ENCODE measurements at regions of chr5 and their contacts with region 1.

Region 1: DNA sequence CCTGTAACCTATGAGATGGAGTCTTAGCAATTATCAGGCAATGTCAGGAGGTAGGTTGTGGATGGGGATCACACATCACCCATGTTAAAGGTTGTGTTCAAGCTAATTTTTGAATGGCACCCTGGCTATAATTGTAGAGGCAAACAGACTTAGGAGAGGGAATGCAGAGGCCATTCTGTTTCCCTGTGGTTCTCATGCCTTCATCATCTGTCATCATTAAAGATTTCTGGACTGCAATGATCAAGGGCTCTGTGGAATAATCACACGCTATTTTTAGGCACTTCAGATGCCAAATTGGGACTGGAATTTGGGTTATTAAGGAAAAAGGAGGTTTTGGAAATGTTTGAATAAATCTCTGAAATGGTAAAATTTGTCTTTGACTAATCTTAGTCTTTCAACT is 1065.4 kb downstream of the TAF11L14 start:
- DNase-seq: no peak
- H3K4me3 Mint-ChIP-seq: no peak overlapping the region
- H3K27ac Mint-ChIP-seq: no peak overlapping the region
- H3K4me1 Mint-ChIP-seq: peaks cover 7% of the 10 kb centered on the region
- H3K27me3 Mint-ChIP-seq: no peaks in the 10 kb centered on the region
- CTCF ChIP-seq: no peak

Region 2: GRCh38 chr5:18393589-18394442 is 305.9 kb before region 1 on chr5:
- CTCF ChIA-PET with region 1: interaction called, 28 read pairs
- POLR2A ChIA-PET with region 1: no interaction called
- intact Hi-C with region 1: loop called (anchors 1 kb)
- DNase-seq: peak; percentile 83
- H3K4me3 Mint-ChIP-seq: no peak overlapping the region
- H3K27ac Mint-ChIP-seq: no peak overlapping the region
- H3K4me1 Mint-ChIP-seq: no peaks in the 10 kb centered on the region
- H3K27me3 Mint-ChIP-seq: no peaks in the 10 kb centered on the region
- CTCF ChIP-seq: peak; percentile 90

Region 3: DNA sequence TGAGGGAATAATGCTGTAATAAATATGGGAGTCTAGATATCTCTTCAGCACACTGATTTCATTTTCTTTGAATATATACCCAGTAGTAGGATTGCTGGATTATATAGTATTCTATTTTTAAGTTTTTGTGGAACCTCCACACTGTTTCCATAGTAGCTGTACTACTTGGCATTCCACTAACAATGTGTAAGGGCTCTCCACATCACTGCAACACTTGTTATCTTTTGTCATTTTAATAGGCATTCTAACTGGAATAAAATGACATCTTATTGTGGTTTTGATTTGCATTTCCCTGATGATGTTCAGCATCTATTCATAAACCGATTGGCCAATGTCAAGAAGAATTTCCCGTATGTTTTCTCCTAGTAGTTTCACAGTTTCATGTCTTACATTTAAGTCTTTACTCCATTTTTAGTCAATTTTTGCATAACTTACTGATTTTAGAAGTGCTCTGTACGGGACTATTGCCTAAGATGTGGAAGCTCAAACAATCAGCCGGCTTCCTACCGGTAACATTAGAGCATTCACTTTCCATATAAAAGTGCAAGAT is 13.3 kb after region 1 on chr5:
- CTCF ChIA-PET with region 1: interaction called, 14 read pairs
- POLR2A ChIA-PET with region 1: no interaction called
- intact Hi-C with region 1: no loop called
- DNase-seq: no peak
- H3K4me3 Mint-ChIP-seq: no peak overlapping the region
- H3K27ac Mint-ChIP-seq: no peak overlapping the region
- H3K4me1 Mint-ChIP-seq: no peaks in the 10 kb centered on the region
- H3K27me3 Mint-ChIP-seq: no peaks in the 10 kb centered on the region
- CTCF ChIP-seq: no peak